Mucosa of descending colon (tissue), 3 donors: ENCODE measurements at regions of chr10 and their contacts with region 1.

Region 1: DNA sequence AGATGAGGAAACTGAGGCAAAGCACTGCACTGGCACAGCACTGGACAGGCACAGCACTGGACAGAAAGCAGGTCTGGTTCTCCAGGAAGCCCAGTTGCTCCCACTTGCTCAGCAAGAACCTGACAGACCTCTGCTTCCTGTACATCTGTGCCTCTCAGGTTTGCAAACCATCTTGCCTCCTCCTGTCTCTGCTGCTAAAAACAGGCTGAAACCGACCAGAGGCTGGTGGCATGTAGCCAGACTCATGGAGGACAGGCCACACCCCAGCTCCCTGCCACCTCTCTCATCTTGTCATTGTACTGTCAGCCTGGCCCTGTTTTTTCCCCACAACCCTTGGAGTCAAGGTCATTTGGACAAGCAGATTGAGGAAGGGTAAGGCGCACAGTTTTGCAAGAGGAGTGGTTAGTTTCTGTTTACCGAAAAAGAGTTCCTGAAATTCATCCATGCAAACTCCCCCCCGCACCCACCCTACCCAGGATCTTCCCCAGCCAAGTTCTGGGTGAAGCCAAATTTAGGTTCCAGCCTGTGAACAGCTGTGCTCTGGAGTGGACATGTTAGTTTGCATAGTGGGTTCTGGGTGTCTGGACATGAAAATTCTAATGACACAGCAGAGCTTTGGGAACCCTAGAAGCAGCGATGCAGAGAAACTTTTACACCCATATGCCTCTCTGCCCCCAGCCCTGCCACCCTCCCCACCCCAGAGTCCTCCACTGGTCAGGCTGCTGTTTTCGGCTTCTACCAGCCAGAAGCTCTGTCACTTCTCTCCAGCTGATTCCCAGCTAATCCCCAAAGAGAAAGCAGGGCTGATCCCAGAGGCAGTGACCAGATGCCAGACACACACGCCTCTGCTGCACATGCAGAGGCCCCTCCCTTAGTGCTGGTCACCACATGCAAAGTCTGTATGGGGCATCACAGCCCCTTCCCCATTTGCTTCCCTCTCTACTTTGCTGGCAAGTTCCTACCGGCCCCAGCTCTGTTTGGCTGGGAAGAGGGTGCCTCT is 8.5 kb upstream of the C10orf105 start:
- DNase-seq: peak; percentile 87 to 91 (median 88)
- ATAC-seq: peak; percentile 76
- H3K4me3 ChIP-seq: no peak overlapping the region
- H3K4me1 ChIP-seq: peaks cover 45% of the 10 kb centered on the region
- CTCF ChIP-seq: no peak

Region 2: DNA sequence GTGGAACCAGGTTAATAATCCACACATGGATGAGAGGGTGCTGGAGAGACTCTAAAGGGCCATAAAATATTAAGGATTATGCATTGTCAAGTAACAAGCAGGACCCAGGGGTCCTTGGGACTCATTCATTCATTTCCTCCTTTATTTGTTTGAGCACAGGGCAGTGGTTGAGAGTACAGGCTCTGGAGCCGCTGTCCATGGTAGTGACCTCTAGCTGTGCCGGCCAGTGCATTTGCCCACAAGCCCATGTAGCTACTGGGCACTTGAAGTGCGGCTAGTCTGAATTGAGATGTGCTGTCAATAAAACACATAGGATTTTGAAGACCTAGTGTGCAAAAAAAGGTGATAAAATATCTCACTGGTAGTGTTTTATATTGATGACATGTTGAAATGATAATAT is 146.0 kb before region 1 on chr10:
- intact Hi-C with region 1: no loop called
- DNase-seq: peak in 1 of 3 donors; percentile 17
- ATAC-seq: no peak
- H3K4me3 ChIP-seq: no peak overlapping the region
- H3K4me1 ChIP-seq: no peaks in the 10 kb centered on the region
- CTCF ChIP-seq: no peak

Region 3: DNA sequence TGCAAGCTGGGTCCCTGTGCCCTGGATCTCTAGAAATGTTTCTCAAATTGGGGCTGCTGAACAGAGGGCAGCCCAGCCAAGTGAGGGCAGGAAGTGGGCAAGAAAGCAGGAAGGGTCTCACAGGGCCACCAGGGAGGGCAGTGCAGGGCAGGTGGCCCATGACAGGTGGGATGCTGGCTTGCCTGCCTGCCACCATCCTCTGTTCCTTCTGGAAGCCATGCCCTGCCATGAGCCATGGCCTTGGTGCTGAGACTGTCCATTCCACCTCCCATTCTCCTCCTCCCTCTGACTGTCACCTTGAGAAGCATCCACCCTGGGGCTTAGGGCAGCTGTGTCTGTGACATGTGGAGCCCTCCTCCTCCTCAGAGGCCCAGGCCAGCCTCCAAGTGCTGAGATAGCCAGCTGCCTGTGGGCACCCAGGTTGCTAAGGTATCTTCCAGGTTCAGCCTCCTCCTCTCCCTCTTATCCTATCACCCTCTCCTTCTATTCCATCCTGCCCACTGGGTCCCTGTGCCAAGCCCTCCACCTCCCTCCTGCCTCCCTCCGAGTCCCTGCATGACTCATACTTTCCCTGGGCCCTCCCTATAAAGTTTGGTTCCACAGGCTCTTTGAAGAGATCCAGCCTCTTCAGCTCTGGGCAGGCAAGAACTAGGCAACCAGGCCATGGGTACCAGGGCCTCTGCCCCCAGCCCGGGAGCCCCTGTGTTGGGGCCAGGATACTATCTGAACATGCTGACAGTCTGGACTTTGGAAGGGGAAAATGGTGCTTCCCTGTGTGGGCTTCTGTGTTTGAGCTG is 44.0 kb after region 1 on chr10:
- intact Hi-C with region 1: loop called in 1 of 2 experiments (anchors 10 kb)
- DNase-seq: peak; percentile 56 to 71 (median 62)
- ATAC-seq: peak; percentile 8
- H3K4me3 ChIP-seq: no peak overlapping the region
- H3K4me1 ChIP-seq: peaks cover 53% of the 10 kb centered on the region
- CTCF ChIP-seq: no peak

Region 4: DNA sequence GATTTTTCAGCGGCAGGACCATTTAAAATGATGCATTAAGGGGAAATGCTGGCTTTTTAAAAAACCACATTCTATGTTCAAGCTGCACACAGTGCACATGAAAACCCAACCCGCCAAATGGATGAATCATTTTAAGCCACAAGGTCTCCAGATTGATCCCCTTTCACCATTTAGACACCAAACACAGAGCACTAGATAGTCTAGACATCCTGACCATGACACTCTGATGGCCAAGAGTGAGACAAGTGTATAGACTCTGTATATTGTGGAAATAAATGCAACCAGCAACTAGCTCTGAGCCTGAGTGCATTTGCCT is 94.4 kb after region 1 on chr10:
- intact Hi-C with region 1: no loop called
- DNase-seq: no peak
- ATAC-seq: no peak
- H3K4me3 ChIP-seq: no peak overlapping the region
- H3K4me1 ChIP-seq: no peaks in the 10 kb centered on the region
- CTCF ChIP-seq: no peak